ENCODE measurements at regions of chr1 and their contacts with region 1.

Region 1: GRCh38 chr1:156338180-156338973 is at the starts of genes CCT3 and TSACC:
- DNase-seq: peak; percentile 99 to 100 (median 100)
- ATAC-seq: peak; percentile 97
- H3K4me3 ChIP-seq: peak within 1 kb of the TSS; percentile 83
- H3K4me3 Mint-ChIP-seq: peak within 1 kb of the TSS; percentile 97 to 99 (median 99)
- H3K27ac ChIP-seq: peak within 1 kb of the TSS; percentile 76
- H3K27ac Mint-ChIP-seq: peak within 1 kb of the TSS; percentile 97 to 99 (median 98)
- H3K4me1 ChIP-seq: peaks cover 11 to 17% of the 10 kb centered on the region in 2 donors
- H3K4me1 Mint-ChIP-seq: peaks cover 16 to 49% (median 40%) of the 10 kb centered on the region in 7 donors
- H3K27me3 ChIP-seq: no peaks in the 10 kb centered on the region
- H3K27me3 Mint-ChIP-seq: peaks cover 0 to 12% (median 0%) of the 10 kb centered on the region in 5 donors
- total RNA-seq, gene CCT3: 78.0 to 282 (median 114) TPM
- total RNA-seq, gene TSACC: 1.1 TPM in 1 of 5 experiments, not detected in the others

Region 2: DNA sequence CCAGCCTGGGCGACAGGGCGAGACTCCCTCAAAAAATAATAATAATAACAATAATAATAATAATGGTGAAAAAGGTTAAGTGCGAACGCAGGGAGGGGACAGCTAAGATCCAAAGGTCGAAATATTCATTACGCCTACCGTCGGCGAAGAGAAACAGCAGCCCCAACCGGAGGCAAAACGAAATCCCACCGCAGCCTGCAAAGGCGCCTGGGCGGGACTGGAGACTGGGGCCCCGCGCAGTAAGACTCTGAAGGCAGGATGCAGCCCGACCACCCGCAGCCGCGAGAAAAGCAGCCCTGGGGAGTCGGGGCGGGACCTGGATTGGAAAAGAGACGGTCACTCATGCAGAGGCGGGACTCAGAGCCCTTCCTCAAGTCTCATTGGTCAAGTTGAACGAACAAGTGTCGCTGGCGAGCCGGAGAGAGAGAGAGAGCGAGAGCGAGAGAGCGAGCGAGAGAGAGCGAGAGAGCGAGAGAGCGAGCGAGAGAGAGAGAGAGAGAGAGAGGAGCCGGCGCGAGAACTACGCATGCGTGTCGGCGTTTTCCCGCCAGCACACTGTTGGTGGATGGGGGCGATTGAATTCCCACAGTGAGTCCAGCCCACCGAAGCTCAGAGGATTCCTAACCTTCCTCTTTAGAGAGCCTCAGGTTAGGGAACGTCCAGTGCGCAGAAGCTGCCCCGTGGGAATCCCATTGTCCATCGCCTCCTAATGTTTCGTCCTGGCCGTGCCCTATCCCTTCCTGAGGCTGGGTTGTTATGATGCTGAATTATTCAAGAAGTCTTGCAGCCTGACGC is 1093.8 kb before region 1 on chr1:
- CTCF ChIA-PET with region 1: no interaction called
- POLR2A ChIA-PET with region 1: no interaction called
- intact Hi-C with region 1: loop called in 1 of 2 experiments (anchors 5 kb)
- DNase-seq: peak; percentile 76 to 96 (median 94)
- ATAC-seq: peak; percentile 92
- H3K4me3 ChIP-seq: peak overlapping the region; percentile 63
- H3K4me3 Mint-ChIP-seq: peak overlapping the region; percentile 84 to 97 (median 91)
- H3K27ac ChIP-seq: peak overlapping the region; percentile 73
- H3K27ac Mint-ChIP-seq: peak overlapping the region; percentile 94 to 100 (median 98)
- H3K4me1 ChIP-seq: peaks cover 19 to 20% of the 10 kb centered on the region in 2 donors
- H3K4me1 Mint-ChIP-seq: peaks cover 31 to 50% (median 44%) of the 10 kb centered on the region in 7 donors
- H3K27me3 ChIP-seq: no peaks in the 10 kb centered on the region
- H3K27me3 Mint-ChIP-seq: peaks cover 0 to 6% (median 3%) of the 10 kb centered on the region in 5 donors

Region 3: GRCh38 chr1:155920717-155921116 is 417.7 kb before region 1 on chr1:
- CTCF ChIA-PET with region 1: no interaction called
- POLR2A ChIA-PET with region 1: no interaction called
- intact Hi-C with region 1: no loop called
- DNase-seq: no peak
- ATAC-seq: no peak
- H3K4me3 ChIP-seq: no peak overlapping the region
- H3K4me3 Mint-ChIP-seq: no peak overlapping the region
- H3K27ac ChIP-seq: no peak overlapping the region
- H3K27ac Mint-ChIP-seq: peak overlapping the region in 1 of 9 donors; percentile 19
- H3K4me1 ChIP-seq: no peaks in the 10 kb centered on the region
- H3K4me1 Mint-ChIP-seq: peaks cover 0 to 16% (median 4%) of the 10 kb centered on the region in 7 donors
- H3K27me3 ChIP-seq: no peaks in the 10 kb centered on the region
- H3K27me3 Mint-ChIP-seq: no peaks in the 10 kb centered on the region

Region 4: GRCh38 chr1:156193488-156194299 is 144.7 kb before region 1 on chr1 and contains the start of gene SLC25A44:
- CTCF ChIA-PET with region 1: no interaction called
- POLR2A ChIA-PET with region 1: no interaction called
- intact Hi-C with region 1: loop called in 1 of 2 experiments (anchors 1 kb)
- DNase-seq: peak; percentile 94 to 98 (median 97)
- ATAC-seq: peak; percentile 99
- H3K4me3 ChIP-seq: peak within 1 kb of the TSS; percentile 92
- H3K4me3 Mint-ChIP-seq: peak within 1 kb of the TSS; percentile 83 to 99 (median 97)
- H3K27ac ChIP-seq: peak within 1 kb of the TSS; percentile 86
- H3K27ac Mint-ChIP-seq: peak within 1 kb of the TSS; percentile 85 to 97 (median 93)
- H3K4me1 ChIP-seq: peaks cover 12 to 31% of the 10 kb centered on the region in 2 donors
- H3K4me1 Mint-ChIP-seq: peaks cover 22 to 53% (median 45%) of the 10 kb centered on the region in 7 donors
- H3K27me3 ChIP-seq: no peaks in the 10 kb centered on the region
- H3K27me3 Mint-ChIP-seq: no peaks in the 10 kb centered on the region
- total RNA-seq, gene SLC25A44: 17.8 to 38.4 (median 19.6) TPM

Region 5: DNA sequence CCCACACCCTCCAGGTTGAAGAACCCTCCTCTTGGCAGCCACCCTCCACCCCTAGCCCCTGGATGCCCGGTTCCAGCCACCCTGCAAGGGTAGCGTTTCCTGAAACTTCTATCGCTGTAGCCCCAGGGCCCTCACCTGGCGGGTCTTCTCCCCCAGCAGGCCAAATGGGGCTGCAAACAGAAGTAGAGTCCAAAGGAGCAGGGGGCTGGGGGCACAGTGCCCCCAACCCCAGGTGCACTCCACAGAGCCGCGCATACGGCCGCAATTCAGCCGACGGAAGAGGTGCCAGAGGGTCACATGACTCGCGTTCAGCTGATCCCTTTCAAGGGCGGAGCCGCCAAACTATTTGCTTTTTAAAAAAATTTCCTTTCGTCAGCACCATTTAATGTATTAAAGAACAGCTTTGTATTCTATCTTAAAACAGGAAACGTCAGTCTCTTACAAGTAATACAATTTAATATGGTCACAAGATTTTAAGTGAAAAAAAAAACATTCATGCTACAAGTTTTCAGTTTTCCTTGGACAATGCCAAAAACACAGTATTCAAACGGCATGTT is 42.9 kb before region 1 on chr1 and contains the start of gene GLMP:
- CTCF ChIA-PET with region 1: no interaction called
- POLR2A ChIA-PET with region 1: interaction called, 3 read pairs
- intact Hi-C with region 1: loop called in 1 of 2 experiments (anchors 1 kb)
- DNase-seq: peak in 8 of 9 donors; percentile 53 to 68 (median 61)
- ATAC-seq: peak; percentile 85
- H3K4me3 ChIP-seq: peak within 1 kb of the TSS; percentile 86
- H3K4me3 Mint-ChIP-seq: peak within 1 kb of the TSS; percentile 88 to 96 (median 91)
- H3K27ac ChIP-seq: peak within 1 kb of the TSS; percentile 76
- H3K27ac Mint-ChIP-seq: peak within 1 kb of the TSS; percentile 78 to 95 (median 80)
- H3K4me1 ChIP-seq: peaks cover 9 to 13% of the 10 kb centered on the region in 2 donors
- H3K4me1 Mint-ChIP-seq: peaks cover 7 to 34% (median 24%) of the 10 kb centered on the region in 7 donors
- H3K27me3 ChIP-seq: no peaks in the 10 kb centered on the region
- H3K27me3 Mint-ChIP-seq: no peaks in the 10 kb centered on the region
- total RNA-seq, gene GLMP: 21.0 to 40.4 (median 24.5) TPM

Region 6: DNA sequence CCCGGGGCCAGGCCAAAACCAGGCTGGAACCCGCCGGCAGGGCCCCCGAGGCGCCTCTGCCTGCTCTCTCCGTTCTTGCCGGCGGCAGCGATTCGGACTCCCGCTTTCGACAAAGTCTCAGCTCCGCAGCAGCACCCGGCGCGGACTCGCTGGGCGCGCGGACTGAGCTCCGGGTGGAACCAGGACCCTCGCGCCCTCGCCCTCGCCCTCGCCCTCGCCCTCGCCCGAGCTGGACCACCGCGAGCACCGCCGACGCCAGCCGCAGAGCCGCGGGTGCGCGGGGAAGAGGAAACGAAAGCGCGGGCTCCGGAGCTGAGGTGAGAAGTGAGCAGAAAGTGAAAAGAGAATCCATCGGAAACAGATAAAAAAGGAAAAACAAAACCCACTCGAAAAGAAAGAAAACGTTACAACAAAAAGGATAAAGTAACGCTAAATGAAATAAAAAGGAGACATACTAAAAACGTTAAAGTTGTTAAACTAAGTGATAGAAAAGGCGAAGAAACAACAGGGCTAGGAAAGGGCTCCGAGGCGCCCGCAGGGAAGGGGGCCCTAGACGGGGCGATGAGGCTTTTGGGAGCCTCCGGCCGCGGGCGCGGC is 97.3 kb after region 1 on chr1:
- CTCF ChIA-PET with region 1: no interaction called
- POLR2A ChIA-PET with region 1: no interaction called
- intact Hi-C with region 1: no loop called
- DNase-seq: peak in 3 of 9 donors; percentile 31 to 44 (median 42)
- ATAC-seq: peak; percentile 55
- H3K4me3 ChIP-seq: peak overlapping the region; percentile 4
- H3K4me3 Mint-ChIP-seq: peak overlapping the region; percentile 78 to 95 (median 88)
- H3K27ac ChIP-seq: no peak overlapping the region
- H3K27ac Mint-ChIP-seq: peak overlapping the region in 2 of 9 donors; percentile 29 to 70
- H3K4me1 ChIP-seq: peaks cover 12 to 30% of the 10 kb centered on the region in 2 donors
- H3K4me1 Mint-ChIP-seq: peaks cover 13 to 40% (median 30%) of the 10 kb centered on the region in 7 donors
- H3K27me3 ChIP-seq: peaks cover 44 to 52% of the 10 kb centered on the region in 2 donors
- H3K27me3 Mint-ChIP-seq: peaks cover 83 to 97% (median 90%) of the 10 kb centered on the region in 5 donors

Region 7: GRCh38 chr1:156728597-156729462 is 390.5 kb after region 1 on chr1 and contains the start of gene ISG20L2:
- CTCF ChIA-PET with region 1: no interaction called
- POLR2A ChIA-PET with region 1: no interaction called
- intact Hi-C with region 1: loop called (anchors 1 to 10 kb)
- DNase-seq: peak; percentile 76 to 98 (median 94)
- ATAC-seq: peak; percentile 96
- H3K4me3 ChIP-seq: peak within 1 kb of the TSS; percentile 97
- H3K4me3 Mint-ChIP-seq: no peak within 1 kb of the TSS
- H3K27ac ChIP-seq: peak within 1 kb of the TSS; percentile 95
- H3K27ac Mint-ChIP-seq: peak within 1 kb of the TSS in 4 of 9 donors; percentile 94 to 99 (median 98)
- H3K4me1 ChIP-seq: peaks cover 38 to 40% of the 10 kb centered on the region in 2 donors
- H3K4me1 Mint-ChIP-seq: peaks cover 18 to 35% (median 22%) of the 10 kb centered on the region in 7 donors
- H3K27me3 ChIP-seq: no peaks in the 10 kb centered on the region
- H3K27me3 Mint-ChIP-seq: no peaks in the 10 kb centered on the region
- total RNA-seq, gene ISG20L2: 44.7 to 59.9 (median 53.9) TPM

Region 8: GRCh38 chr1:156767101-156767878 is 428.9 kb after region 1 on chr1 and contains the start of gene PRCC:
- CTCF ChIA-PET with region 1: no interaction called
- POLR2A ChIA-PET with region 1: no interaction called
- intact Hi-C with region 1: loop called in 1 of 2 experiments (anchors 1 kb)
- DNase-seq: peak; percentile 83 to 100 (median 98)
- ATAC-seq: peak; percentile 94
- H3K4me3 ChIP-seq: peak within 1 kb of the TSS; percentile 89
- H3K4me3 Mint-ChIP-seq: no peak within 1 kb of the TSS
- H3K27ac ChIP-seq: peak within 1 kb of the TSS; percentile 98
- H3K27ac Mint-ChIP-seq: peak within 1 kb of the TSS in 3 of 9 donors; percentile 13 to 91 (median 88)
- H3K4me1 ChIP-seq: peaks cover 23 to 36% of the 10 kb centered on the region in 2 donors
- H3K4me1 Mint-ChIP-seq: peaks cover 35 to 46% (median 37%) of the 10 kb centered on the region in 7 donors
- H3K27me3 ChIP-seq: no peaks in the 10 kb centered on the region
- H3K27me3 Mint-ChIP-seq: no peaks in the 10 kb centered on the region
- total RNA-seq, gene PRCC: 53.2 to 88.9 (median 61.7) TPM

Measured in naive thymus-derived CD4-positive, alpha-beta T cell (primary cell).